Activated naive CD4-positive, alpha-beta T cell treated with anti-CD3 and anti-CD28 coated beads for 36 hours (primary cell): ENCODE measurements at regions of chr19 and their contacts with region 1.

Region 1: DNA sequence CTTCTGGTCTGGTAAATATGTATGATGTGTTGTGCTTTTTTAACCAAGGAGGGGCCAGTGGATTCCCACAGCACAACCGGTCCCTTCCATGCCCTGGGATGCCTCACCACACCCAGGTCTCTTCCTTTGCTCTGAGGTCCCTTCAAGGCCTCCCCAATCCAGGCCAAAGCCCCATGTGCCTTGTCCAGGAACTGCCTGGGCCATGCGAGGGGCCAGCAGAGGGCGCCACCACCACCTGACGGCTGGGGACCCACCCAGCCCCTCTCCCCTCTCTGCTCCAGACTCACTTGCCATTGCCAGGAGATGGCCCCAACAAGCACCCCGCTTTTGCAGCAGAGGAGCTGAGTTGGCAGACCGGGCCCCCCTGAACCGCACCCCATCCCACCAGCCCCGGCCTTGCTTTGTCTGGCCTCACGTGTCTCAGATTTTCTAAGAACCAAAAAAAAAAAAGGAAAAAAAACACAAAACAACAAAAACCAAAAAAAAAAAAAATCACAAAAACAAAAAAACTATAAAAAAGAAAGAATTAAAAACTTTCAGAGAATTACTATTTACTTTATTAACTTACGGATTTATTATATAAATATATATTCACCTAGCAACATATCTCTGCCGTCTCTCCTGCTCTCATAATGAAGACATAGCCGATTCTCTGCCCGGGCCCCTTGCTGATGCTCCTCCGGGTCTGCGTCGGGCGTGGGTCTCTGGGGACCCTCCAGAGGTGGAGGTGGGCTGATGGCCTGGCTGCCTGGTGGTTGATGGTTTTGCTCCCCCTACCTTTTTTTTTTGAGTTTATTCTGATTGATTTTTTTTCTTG is 14.4 kb downstream of the CAPN12 start:
- DNase-seq: peak; percentile 87
- H3K4me3 Mint-ChIP-seq: no peak overlapping the region
- H3K27ac Mint-ChIP-seq: no peak overlapping the region
- H3K4me1 Mint-ChIP-seq: peaks cover 9% of the 10 kb centered on the region
- H3K27me3 Mint-ChIP-seq: no peaks in the 10 kb centered on the region

Region 2: DNA sequence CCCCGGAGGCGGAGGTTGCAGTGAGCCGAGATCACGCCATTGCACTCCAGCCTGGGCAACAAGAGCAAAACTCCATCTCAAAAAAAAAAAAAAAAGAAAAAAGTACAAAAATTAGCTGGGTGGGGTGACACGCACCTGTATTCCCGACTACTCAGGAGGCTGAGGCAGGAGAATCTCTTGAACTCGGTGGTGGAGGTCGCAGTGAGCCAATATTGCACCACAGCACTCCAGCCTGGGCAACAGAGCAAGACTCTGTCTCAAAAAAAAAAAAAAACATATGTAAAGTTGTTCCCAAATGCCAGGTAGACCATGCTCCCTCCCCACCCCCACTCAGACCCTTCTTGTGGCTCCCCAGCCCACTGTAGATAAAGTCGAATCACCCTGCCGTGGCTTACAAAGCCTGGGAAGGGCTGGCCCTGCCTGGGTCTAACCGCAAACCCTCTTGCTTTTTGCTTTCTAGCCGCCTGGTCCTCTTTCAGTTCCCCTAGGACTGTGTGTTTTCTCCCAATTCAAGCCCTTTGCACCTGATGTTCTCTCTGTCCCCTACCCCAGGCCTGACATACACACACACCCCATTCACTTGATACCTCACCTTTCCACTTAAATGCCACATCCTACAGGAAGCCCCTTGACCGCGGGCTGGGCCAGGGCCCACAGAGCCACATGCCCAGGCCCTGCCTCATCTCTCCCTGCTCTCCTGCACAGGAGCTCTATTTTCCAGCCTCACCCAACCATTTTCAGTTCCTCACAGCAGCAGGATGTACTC is 146.5 kb before region 1 on chr19:
- CTCF ChIA-PET with region 1: no interaction called
- intact Hi-C with region 1: no loop called
- DNase-seq: no peak
- H3K4me3 Mint-ChIP-seq: no peak overlapping the region
- H3K27ac Mint-ChIP-seq: no peak overlapping the region
- H3K4me1 Mint-ChIP-seq: no peaks in the 10 kb centered on the region
- H3K27me3 Mint-ChIP-seq: no peaks in the 10 kb centered on the region

Region 3: GRCh38 chr19:38838573-38839269 is 108.9 kb after region 1 on chr19:
- CTCF ChIA-PET with region 1: interaction called, 3 read pairs
- intact Hi-C with region 1: loop called (anchors 1 kb)
- DNase-seq: peak; percentile 94
- H3K4me3 Mint-ChIP-seq: peak overlapping the region; percentile 37
- H3K27ac Mint-ChIP-seq: peak overlapping the region; percentile 89
- H3K4me1 Mint-ChIP-seq: peaks cover 63% of the 10 kb centered on the region
- H3K27me3 Mint-ChIP-seq: no peaks in the 10 kb centered on the region